PC-3 (cell line): ENCODE measurements at regions of chr3 and their contacts with region 1.

Region 1: GRCh38 chr3:9384141-9384853 is 13.1 kb upstream of the SETD5 start:
- DNase-seq: no peak
- ATAC-seq: peak; percentile 33
- H3K4me3 ChIP-seq: no peak overlapping the region
- H3K27ac ChIP-seq: no peak overlapping the region
- H3K4me1 ChIP-seq: no peaks in the 10 kb centered on the region
- H3K27me3 ChIP-seq: no peaks in the 10 kb centered on the region
- CTCF ChIP-seq: no peak

Region 2: GRCh38 chr3:9422712-9423424 is 38.6 kb after region 1 on chr3:
- CTCF ChIA-PET with region 1: no interaction called
- POLR2A ChIA-PET with region 1: interaction called, 11 read pairs
- intact Hi-C with region 1: no loop called
- DNase-seq: peak; percentile 98
- ATAC-seq: peak; percentile 96
- H3K4me3 ChIP-seq: peak overlapping the region; percentile 31; the same call in 1 of the 2 replicates
- H3K27ac ChIP-seq: peak overlapping the region; percentile 85
- H3K4me1 ChIP-seq: peaks cover 40% of the 10 kb centered on the region
- H3K27me3 ChIP-seq: no peaks in the 10 kb centered on the region
- CTCF ChIP-seq: peak; percentile 76

Region 3: DNA sequence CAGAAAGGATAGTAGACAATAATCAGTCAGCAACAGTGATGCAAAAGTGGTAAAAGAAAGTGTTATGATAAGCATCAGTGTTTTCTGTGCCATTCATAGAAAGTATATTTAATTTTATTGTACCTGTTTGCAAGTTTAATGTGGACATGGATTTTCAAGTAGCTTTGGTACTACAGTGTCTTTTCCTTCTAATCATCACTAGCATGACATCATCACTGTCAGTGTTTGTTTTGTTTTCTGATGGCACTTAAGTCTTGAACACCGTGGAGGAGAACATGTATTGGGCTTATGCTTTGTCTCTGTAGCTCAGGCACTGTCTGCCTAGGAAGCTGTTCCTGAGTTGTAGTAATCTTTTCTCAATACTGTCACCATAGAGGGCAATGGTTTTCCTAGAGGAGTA is 55.0 kb after region 1 on chr3:
- CTCF ChIA-PET with region 1: no interaction called
- POLR2A ChIA-PET with region 1: interaction called, 12 read pairs
- intact Hi-C with region 1: no loop called
- DNase-seq: no peak
- ATAC-seq: 0 out of 2 replicates have a peak, but pooled peaks have one; percentile 20
- H3K4me3 ChIP-seq: no peak overlapping the region
- H3K27ac ChIP-seq: no peak overlapping the region
- H3K4me1 ChIP-seq: no peaks in the 10 kb centered on the region
- H3K27me3 ChIP-seq: no peaks in the 10 kb centered on the region
- CTCF ChIP-seq: no peak